ENCODE measurements at regions of chr14 and their contacts with region 1.

Region 1: DNA sequence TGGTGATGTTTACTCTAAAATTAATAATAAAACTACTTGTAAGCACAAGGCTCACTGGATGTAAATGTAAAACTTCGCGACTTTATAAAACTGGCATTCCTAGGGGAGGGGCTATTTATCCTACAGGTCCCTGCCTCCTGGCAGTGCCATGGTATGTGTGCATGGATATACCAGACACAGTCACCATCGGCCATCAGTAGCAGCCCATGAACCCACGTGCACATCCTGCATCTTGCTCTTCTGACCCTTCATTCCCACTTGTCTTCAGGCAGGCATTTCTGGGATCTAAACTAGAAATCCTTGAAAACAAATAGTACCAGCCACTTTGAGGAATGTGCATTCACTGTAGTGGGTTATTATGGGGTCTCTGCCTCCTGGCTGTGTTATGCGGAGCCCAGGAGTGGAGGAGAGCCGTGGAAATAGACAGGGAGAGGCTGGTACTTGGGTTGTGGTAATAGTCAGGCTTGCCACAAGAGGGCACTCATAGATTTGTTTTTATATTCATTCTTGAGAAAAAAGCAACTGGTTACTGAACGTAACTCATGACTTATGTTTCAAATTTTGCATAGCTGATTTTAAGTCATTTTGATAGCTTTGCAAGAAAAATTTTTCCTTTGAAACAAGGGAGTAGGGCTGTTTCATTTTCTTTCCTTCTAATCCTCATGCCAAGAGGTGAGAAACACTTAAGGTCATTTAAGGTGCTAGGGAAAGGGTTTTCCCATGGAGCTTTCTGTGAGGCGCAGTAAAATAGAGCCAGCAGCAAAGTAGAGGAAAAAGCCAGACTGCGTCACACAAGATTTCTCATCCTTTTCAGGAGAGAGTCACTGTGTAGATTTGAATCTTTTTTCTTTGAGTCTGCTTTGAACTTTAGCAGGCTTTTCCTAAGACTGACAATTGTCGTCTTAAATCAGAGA is 17.4 kb upstream of the GALNT16 start:
- DNase-seq: peak; percentile 74
- H3K4me3 ChIP-seq: no peak overlapping the region
- H3K27ac ChIP-seq: no peak overlapping the region
- H3K4me1 ChIP-seq: no peaks in the 10 kb centered on the region
- CTCF ChIP-seq: peak; percentile 94

Region 2: DNA sequence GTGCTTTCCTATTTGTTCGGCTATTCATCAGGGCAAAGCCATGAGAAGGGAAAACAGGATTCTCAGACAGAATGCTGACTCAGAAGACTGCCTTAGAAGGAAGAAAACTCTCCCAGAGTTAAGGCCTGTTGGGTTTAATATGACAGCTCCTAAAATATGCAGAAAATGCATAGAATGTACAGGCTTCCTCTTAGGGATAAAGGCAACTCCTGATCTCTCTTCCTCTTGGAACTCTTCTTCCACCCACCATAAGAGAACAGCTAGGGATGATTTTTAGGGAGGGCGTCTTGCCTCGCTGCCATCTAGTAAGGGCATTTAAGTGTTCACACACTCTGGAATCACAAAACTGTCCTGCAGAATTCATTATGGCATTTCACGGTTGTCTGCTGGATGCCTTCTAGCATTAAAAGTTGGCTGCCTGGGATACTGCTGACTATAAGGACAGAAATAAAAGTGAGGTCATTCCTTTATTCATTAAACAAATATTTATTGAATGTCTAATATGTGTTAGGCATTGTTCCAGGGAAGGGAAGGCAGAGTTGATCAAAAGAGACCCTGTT is 163.3 kb before region 1 on chr14:
- CTCF ChIA-PET with region 1: no interaction called
- POLR2A ChIA-PET with region 1: no interaction called
- intact Hi-C with region 1: no loop called
- DNase-seq: no peak
- H3K4me3 ChIP-seq: no peak overlapping the region
- H3K27ac ChIP-seq: no peak overlapping the region
- H3K4me1 ChIP-seq: no peaks in the 10 kb centered on the region
- CTCF ChIP-seq: no peak

Region 3: DNA sequence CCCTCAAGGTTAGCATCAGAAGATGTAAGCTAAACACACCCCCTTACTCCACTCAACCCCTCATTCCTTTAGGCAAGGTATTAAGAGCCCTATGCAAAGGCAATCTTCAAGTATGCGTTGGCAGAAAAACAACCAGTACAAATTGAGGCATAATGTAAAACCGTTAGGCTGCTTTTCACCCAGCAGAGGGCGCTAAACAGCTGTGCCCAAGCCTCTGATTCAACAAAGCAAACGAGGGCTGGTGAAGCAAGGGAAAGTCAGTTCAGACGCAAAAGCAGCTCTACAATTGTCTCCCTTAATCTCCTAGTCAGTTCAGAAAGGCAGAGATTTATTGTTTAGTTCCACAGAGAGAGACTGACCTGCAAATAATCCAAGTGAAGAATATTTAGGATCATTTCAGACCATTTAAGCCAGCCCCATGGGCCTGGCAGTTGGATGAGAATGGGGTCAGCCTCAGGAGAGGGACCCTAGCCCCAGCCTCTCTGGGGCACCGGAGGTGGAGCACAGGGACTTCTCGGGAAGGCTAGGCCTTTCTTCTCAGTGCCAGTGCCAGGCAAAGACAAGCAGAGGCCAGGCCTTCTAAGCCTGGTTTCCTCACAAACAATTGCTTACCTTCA is 113.2 kb before region 1 on chr14:
- CTCF ChIA-PET with region 1: no interaction called
- POLR2A ChIA-PET with region 1: no interaction called
- intact Hi-C with region 1: loop called (anchors 5 kb)
- DNase-seq: peak; percentile 79
- H3K4me3 ChIP-seq: no peak overlapping the region
- H3K27ac ChIP-seq: no peak overlapping the region
- H3K4me1 ChIP-seq: no peaks in the 10 kb centered on the region
- CTCF ChIP-seq: peak; percentile 97

Region 4: DNA sequence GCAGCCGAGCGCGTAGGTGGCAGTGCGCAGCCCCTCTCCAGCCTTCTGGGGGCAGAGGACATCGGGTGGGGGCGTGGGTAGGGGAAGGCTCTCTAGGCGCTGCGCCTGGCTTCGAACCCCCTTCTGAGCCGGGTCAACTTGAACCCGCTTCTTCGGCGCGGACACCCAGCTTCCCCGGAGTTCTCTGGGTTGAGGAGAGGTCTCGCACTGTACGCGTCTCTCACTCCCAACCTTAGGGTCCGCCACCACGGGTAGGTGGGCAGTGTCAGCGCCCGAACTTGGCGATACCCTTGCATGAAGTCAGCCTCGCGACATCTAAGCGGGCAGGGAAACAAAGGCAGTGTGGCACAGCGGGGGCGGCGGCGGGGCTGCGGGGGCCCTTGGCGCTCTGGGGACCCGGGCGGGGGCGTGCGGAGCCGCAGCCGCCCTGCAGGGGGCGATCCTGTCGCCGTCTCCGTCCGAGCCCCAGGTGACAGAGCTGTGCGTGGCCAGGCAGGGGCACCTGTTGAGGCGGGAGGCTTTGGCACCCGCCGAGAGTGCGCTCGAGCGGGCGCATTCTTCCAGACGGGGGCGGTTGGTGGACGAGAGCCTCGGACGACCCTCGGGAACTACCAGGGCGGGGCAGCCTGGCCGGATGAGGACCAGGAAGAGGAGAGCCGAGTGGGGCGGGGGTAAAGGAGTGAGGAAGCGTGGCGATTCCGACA is 18.4 kb after region 1 on chr14:
- CTCF ChIA-PET with region 1: no interaction called
- POLR2A ChIA-PET with region 1: no interaction called
- intact Hi-C with region 1: no loop called
- DNase-seq: peak; percentile 55
- H3K4me3 ChIP-seq: no peak overlapping the region
- H3K27ac ChIP-seq: no peak overlapping the region
- H3K4me1 ChIP-seq: peaks cover 13% of the 10 kb centered on the region
- CTCF ChIP-seq: peak; percentile 76

Region 5: DNA sequence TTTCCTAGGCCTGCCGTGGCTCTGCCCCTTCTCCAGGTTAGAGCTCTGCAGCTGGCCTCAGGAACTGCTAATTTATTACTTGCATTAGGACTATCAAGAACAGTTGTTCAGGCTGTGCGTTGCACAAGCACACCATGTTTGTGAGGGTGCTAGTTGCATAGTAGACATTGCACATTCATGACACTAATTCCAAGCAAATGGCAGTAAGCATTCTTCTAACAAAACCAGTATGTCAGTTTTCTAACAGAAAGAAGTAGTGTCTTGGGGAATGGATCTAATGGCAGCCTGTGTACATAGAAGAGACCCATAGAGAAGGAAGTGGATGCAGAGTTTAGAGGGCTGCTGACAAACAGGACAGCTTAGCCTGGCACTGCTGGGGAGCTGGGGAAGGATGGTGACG is 101.6 kb after region 1 on chr14:
- CTCF ChIA-PET with region 1: no interaction called
- POLR2A ChIA-PET with region 1: no interaction called
- intact Hi-C with region 1: no loop called
- DNase-seq: no peak
- H3K4me3 ChIP-seq: no peak overlapping the region
- H3K27ac ChIP-seq: no peak overlapping the region
- H3K4me1 ChIP-seq: no peaks in the 10 kb centered on the region
- CTCF ChIP-seq: no peak

Region 6: GRCh38 chr14:69354383-69355153 is 112.0 kb after region 1 on chr14:
- CTCF ChIA-PET with region 1: no interaction called
- POLR2A ChIA-PET with region 1: no interaction called
- intact Hi-C with region 1: loop called (anchors 5 kb)
- DNase-seq: peak; percentile 86
- H3K4me3 ChIP-seq: peak overlapping the region; percentile 46
- H3K27ac ChIP-seq: peak overlapping the region; percentile 63
- H3K4me1 ChIP-seq: peaks cover 34% of the 10 kb centered on the region
- CTCF ChIP-seq: no peak

Region 7: DNA sequence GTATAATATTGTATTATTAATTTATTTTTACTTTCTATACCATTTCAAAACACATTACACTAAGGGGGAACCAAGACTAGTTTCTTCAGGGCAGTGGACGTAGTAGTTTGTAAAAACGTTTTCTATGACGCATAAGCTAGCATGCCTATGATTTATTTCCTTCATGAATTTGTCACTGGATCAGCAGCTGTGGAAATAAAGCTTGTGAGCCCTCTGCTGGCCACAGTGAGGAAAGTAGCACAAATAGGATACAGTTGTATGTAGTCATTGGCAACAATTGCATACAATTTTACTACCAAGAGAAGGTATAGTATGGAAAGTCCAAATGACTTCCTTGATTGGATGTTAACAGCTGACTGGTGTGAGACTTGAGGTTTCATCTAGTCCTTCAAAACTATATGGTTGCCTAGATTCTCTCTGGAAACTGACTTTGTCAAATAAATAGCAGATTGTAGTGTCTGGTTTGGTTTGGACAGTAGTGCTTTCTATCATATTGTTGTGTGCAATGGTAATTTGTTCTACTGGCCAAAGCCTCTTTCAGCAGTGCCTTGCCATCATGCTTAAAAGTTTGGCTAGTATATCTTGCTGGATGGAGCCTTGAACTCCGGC is 217.6 kb after region 1 on chr14:
- CTCF ChIA-PET with region 1: interaction called, 3 read pairs
- POLR2A ChIA-PET with region 1: no interaction called
- intact Hi-C with region 1: loop called (anchors 2 kb)
- DNase-seq: peak; percentile 79
- H3K4me3 ChIP-seq: no peak overlapping the region
- H3K27ac ChIP-seq: no peak overlapping the region
- H3K4me1 ChIP-seq: no peaks in the 10 kb centered on the region
- CTCF ChIP-seq: peak; percentile 95

Region 8: DNA sequence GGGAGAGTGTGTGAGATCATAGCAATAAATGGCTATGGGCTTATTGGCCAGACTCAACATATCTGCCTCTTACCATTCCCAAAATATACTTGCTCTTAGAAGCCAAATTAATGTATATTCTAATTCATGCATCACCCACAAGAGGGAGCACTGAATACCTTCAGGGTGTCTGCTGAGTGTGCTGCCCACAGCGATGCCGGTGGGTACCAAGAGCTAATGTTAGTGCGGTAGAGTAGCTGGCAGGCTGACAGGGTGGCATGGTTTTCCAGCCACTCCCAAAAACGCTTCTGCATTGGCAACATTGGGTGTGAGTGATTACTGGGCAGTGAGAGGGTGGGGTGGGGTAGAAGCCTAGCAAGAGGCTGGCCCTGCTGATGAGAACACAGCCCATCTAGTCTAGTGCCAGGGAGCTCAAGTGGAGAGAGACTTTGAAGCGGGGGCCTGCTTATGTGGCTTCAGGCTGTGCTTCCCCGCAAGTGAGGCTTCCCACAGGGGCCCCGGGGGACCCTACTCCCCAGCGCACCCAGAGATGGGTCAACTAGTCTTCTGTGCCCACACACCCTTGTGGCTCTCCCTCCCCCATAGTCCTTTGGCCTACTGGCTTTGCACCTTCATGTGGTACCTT is 232.7 kb after region 1 on chr14:
- CTCF ChIA-PET with region 1: no interaction called
- POLR2A ChIA-PET with region 1: no interaction called
- intact Hi-C with region 1: loop called (anchors 5 kb)
- DNase-seq: peak; percentile 52
- H3K4me3 ChIP-seq: no peak overlapping the region
- H3K27ac ChIP-seq: no peak overlapping the region
- H3K4me1 ChIP-seq: peaks cover 12% of the 10 kb centered on the region
- CTCF ChIP-seq: peak; percentile 77

Region 9: GRCh38 chr14:69574263-69574953 is 331.8 kb after region 1 on chr14 and contains the start of gene CCDC177:
- CTCF ChIA-PET with region 1: no interaction called
- POLR2A ChIA-PET with region 1: no interaction called
- intact Hi-C with region 1: loop called (anchors 2 kb)
- DNase-seq: peak; percentile 50
- H3K4me3 ChIP-seq: peak within 1 kb of the TSS; percentile 42
- H3K27ac ChIP-seq: no peak within 1 kb of the TSS
- H3K4me1 ChIP-seq: no peaks in the 10 kb centered on the region
- CTCF ChIP-seq: peak; percentile 84
- total RNA-seq, gene CCDC177: not detected in 2 replicates

Region 10: GRCh38 chr14:70744641-70745040 is 1502.1 kb after region 1 on chr14:
- CTCF ChIA-PET with region 1: no interaction called
- POLR2A ChIA-PET with region 1: no interaction called
- intact Hi-C with region 1: no loop called
- DNase-seq: no peak
- H3K4me3 ChIP-seq: no peak overlapping the region
- H3K27ac ChIP-seq: no peak overlapping the region
- H3K4me1 ChIP-seq: no peaks in the 10 kb centered on the region
- CTCF ChIP-seq: no peak